Activated B cell treated with CpG ODN at 0.5 μM for 24 hours (primary cell): ENCODE measurements at regions of chr2 and their contacts with region 1.

Region 1: DNA sequence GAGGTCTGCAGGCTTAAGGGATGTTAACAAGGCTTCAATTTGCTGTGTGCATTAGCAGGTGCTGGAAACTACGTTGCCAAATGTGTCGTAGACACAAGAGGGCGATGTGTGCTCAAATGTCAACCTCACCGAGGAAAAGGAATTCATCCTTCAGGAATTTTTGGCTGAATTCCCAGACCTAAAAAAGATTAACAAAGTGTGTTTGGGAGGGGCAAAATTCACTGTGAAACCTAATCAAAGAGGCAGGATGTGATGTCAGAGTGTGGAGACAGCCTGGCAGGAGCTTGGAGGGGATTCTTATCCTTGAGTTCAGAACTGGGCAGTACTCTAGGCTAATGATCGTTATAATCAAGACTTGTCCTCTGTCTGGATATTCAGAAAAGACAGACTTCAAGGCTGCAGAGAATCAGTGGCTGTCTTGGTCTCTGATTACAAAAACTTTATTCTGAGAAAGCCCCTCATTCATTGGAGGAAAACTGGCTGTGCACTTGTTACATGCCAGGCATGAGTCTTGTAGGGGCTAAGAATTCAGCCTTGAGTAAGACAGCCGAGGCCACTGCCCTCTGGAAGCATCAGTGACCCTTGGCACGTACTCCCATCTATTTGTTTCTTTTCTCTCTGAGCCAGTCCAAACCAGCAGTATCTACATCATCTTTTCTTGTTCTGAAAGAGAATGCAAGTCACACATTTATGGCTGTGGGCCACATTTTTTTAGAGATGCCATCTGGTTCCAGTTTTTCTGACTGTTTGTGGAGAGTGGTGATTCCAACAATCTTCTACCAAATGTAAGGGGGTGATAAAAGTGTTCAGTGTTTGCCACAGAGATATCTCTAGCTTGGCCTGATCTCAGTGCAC is 18.7 kb upstream of the SCYGR1 start:
- DNase-seq: no peak
- ATAC-seq: no peak
- H3K4me3 Mint-ChIP-seq: peak overlapping the region; percentile 35
- H3K27ac Mint-ChIP-seq: peak overlapping the region; percentile 5
- H3K4me1 Mint-ChIP-seq: peaks cover 46% of the 10 kb centered on the region
- H3K27me3 Mint-ChIP-seq: no peaks in the 10 kb centered on the region
- CTCF ChIP-seq: peak; percentile 30

Region 2: GRCh38 chr2:227388537-227389011 is 17.8 kb before region 1 on chr2:
- CTCF ChIA-PET with region 1: interaction called, 4 read pairs
- POLR2A ChIA-PET with region 1: interaction called, 3 read pairs
- intact Hi-C with region 1: loop called (anchors 2 kb)
- DNase-seq: no peak
- ATAC-seq: no peak
- H3K4me3 Mint-ChIP-seq: no peak overlapping the region
- H3K27ac Mint-ChIP-seq: no peak overlapping the region
- H3K4me1 Mint-ChIP-seq: peaks cover 45% of the 10 kb centered on the region
- H3K27me3 Mint-ChIP-seq: no peaks in the 10 kb centered on the region
- CTCF ChIP-seq: no peak

Region 3: GRCh38 chr2:227471924-227472264 is 65.5 kb after region 1 on chr2 and contains the start of gene AGFG1:
- CTCF ChIA-PET with region 1: interaction called, 17 read pairs
- POLR2A ChIA-PET with region 1: interaction called, 8 read pairs
- intact Hi-C with region 1: loop called (anchors 1 kb)
- DNase-seq: peak; percentile 89
- ATAC-seq: peak; percentile 87
- H3K4me3 Mint-ChIP-seq: peak within 1 kb of the TSS; percentile 90
- H3K27ac Mint-ChIP-seq: peak within 1 kb of the TSS; percentile 78
- H3K4me1 Mint-ChIP-seq: peaks cover 36% of the 10 kb centered on the region
- H3K27me3 Mint-ChIP-seq: no peaks in the 10 kb centered on the region
- CTCF ChIP-seq: peak; percentile 77
- total RNA-seq, gene AGFG1: 108 and 125 TPM in 2 replicates

Region 4: DNA sequence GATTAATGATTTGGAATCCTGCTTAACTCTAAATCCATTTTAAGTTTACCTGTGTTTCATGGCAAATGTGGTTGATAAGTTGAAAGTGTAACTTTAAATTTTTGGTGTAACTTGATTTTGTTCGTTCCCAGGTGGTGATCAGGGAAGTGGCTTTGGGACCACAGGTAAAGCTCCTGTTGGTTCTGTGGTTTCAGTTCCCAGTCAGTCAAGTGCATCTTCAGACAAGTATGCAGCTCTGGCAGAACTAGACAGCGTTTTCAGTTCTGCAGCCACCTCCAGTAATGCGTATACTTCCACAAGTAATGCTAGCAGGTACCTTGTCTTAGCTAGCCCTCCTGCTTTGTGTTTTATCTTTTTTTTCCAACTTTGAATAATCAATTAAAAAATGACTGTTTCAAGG is 128.3 kb after region 1 on chr2:
- CTCF ChIA-PET with region 1: no interaction called
- POLR2A ChIA-PET with region 1: no interaction called
- intact Hi-C with region 1: loop called (anchors 5 kb)
- DNase-seq: no peak
- ATAC-seq: no peak
- H3K4me3 Mint-ChIP-seq: no peak overlapping the region
- H3K27ac Mint-ChIP-seq: no peak overlapping the region
- H3K4me1 Mint-ChIP-seq: peaks cover 9% of the 10 kb centered on the region
- H3K27me3 Mint-ChIP-seq: no peaks in the 10 kb centered on the region
- CTCF ChIP-seq: no peak

Region 5: GRCh38 chr2:227545990-227546389 is 139.6 kb after region 1 on chr2:
- CTCF ChIA-PET with region 1: interaction called, 4 read pairs
- POLR2A ChIA-PET with region 1: no interaction called
- intact Hi-C with region 1: loop called (anchors 5 kb)
- DNase-seq: no peak
- ATAC-seq: no peak
- H3K4me3 Mint-ChIP-seq: no peak overlapping the region
- H3K27ac Mint-ChIP-seq: no peak overlapping the region
- H3K4me1 Mint-ChIP-seq: peaks cover 6% of the 10 kb centered on the region
- H3K27me3 Mint-ChIP-seq: no peaks in the 10 kb centered on the region
- CTCF ChIP-seq: no peak

Region 6: DNA sequence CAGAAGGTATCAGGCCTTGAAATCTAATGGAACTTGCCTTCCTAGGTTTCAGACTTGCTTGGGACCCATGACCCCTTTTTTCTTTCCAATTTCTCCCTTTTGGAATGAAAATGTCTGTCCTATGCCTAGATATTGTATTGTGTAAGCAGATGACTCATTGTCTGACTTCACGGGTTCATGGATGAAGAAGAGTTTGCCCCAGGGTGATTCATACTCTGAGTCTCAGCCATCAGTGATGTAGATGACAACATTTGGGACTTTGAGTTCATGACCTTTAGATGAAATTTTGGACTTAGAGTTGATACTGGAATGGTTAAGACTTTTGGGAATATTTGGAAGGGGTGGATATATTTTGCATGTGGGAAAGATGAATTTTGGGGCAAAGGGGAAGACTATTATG is 249.1 kb after region 1 on chr2:
- CTCF ChIA-PET with region 1: interaction called, 3 read pairs
- POLR2A ChIA-PET with region 1: no interaction called
- intact Hi-C with region 1: loop called (anchors 5 kb)
- DNase-seq: no peak
- ATAC-seq: no peak
- H3K4me3 Mint-ChIP-seq: no peak overlapping the region
- H3K27ac Mint-ChIP-seq: no peak overlapping the region
- H3K4me1 Mint-ChIP-seq: no peaks in the 10 kb centered on the region
- H3K27me3 Mint-ChIP-seq: peaks cover 7% of the 10 kb centered on the region
- CTCF ChIP-seq: no peak

Region 7: DNA sequence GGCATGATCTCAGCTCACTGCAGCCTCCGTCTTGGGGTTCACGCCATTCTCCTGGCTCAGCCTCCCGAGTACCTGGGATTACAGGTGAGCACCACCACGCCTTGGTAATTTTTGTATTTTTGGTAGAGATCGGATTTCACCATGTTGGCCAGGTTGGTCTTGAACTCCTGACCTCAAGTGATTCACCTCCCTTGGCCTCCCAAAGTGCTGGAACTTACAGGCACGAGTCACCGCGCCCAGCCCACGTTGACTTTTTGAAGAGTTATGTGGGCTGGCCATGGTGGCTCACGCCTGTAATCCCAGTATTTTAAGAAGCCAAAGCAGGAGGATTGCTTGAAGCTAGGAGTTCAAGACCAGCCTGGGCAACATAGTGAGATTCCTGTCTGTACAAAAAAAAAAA is 428.0 kb after region 1 on chr2:
- CTCF ChIA-PET with region 1: no interaction called
- POLR2A ChIA-PET with region 1: no interaction called
- intact Hi-C with region 1: no loop called
- DNase-seq: no peak
- ATAC-seq: no peak
- H3K4me3 Mint-ChIP-seq: no peak overlapping the region
- H3K27ac Mint-ChIP-seq: no peak overlapping the region
- H3K4me1 Mint-ChIP-seq: no peaks in the 10 kb centered on the region
- H3K27me3 Mint-ChIP-seq: peaks cover 6% of the 10 kb centered on the region
- CTCF ChIP-seq: no peak